CD8-positive, alpha-beta T cell (primary cell): ENCODE measurements at regions of chr2 and their contacts with region 1.

Region 1: GRCh38 chr2:239257511-239257937 is 143.3 kb downstream of the HDAC4 start:
- DNase-seq: peak in 2 of 9 experiments; percentile 28 to 47
- ATAC-seq: peak; percentile 60
- H3K4me3 ChIP-seq: no peak overlapping the region
- H3K4me3 Mint-ChIP-seq: no peak overlapping the region
- H3K27ac ChIP-seq: no peak overlapping the region
- H3K27ac Mint-ChIP-seq: peak overlapping the region; percentile 53
- H3K4me1 ChIP-seq: peaks cover 78% of the 10 kb centered on the region
- H3K4me1 Mint-ChIP-seq: peaks cover 88% of the 10 kb centered on the region
- H3K27me3 ChIP-seq: no peaks in the 10 kb centered on the region
- H3K27me3 Mint-ChIP-seq: no peaks in the 10 kb centered on the region
- CTCF ChIP-seq: no peak

Region 2: DNA sequence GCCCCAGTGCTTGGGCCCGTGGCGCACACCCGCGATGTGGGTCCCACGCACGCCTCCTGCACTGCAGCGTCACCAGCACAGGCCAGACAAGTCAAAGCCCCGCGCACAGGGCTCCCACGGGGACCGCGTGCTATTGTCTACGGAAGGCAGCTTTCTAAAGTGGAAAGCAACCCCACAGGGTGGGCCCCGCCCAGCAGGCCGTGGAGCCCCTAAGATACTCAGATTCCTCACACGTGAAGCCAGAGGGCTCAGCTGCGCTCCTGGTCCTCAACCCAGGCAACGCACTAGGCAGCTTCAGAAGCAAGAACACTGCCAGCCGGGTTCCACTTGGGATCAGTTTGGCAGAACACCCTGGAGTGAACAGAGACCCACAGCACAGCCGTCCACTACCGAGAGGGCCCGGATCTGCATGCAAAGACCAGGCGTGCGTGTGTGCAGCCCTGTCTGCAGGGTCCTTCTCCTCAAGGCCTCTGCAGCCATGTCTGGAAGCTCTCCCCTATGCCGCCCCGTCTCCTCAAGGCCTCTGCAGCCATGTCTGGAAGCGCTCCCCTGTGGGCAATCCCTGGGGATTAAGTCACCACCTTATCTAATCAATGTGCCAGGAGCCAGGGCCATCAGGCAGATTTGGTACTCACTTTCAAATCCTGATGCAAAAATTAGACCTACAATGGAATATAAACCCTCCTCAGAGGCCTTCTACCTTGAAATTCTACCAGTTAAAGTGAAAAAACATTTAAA is 88.0 kb before region 1 on chr2:
- CTCF ChIA-PET with region 1: no interaction called
- POLR2A ChIA-PET with region 1: no interaction called
- intact Hi-C with region 1: no loop called
- DNase-seq: no peak
- ATAC-seq: no peak
- H3K4me3 ChIP-seq: no peak overlapping the region
- H3K4me3 Mint-ChIP-seq: no peak overlapping the region
- H3K27ac ChIP-seq: no peak overlapping the region
- H3K27ac Mint-ChIP-seq: no peak overlapping the region
- H3K4me1 ChIP-seq: peaks cover 7% of the 10 kb centered on the region
- H3K4me1 Mint-ChIP-seq: peaks cover 9% of the 10 kb centered on the region
- H3K27me3 ChIP-seq: no peaks in the 10 kb centered on the region
- H3K27me3 Mint-ChIP-seq: no peaks in the 10 kb centered on the region
- CTCF ChIP-seq: no peak

Region 3: DNA sequence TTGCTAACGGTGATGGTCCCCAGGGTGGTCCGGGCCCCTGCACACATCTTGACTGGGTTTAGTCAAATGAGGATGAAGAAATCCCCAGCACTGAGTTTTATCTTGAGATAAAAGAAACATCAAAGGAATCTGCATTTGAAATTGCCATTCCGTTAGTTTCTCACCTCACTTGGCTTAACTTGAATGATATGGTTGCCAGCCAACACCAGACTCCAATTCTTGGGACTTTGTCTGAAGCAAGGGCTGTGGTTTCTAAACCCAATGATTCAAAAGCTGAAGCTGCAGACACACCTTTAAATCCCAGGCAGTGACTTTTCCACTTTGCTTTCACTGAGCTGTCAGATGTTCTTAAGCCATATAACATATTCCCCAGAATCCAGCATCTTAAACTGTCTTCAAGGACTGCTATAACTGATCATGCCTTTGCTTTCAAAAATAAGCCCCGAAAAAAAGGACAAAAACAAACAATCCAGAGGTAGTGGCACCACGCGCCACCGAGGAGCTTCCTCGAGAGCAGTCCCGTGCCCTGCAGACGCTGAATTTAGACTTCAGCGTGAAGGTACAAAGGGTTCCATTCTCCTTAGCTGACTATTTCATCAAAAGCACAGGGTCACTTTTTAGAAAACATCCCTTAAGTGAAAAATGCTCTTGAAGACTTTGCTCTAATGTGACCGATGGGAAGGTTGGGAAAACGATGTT is 46.0 kb before region 1 on chr2:
- CTCF ChIA-PET with region 1: no interaction called
- POLR2A ChIA-PET with region 1: interaction called, 3 read pairs
- intact Hi-C with region 1: loop called in 1 of 2 experiments (anchors 5 kb)
- DNase-seq: peak in 1 of 9 experiments; percentile 33
- ATAC-seq: no peak
- H3K4me3 ChIP-seq: no peak overlapping the region
- H3K4me3 Mint-ChIP-seq: no peak overlapping the region
- H3K27ac ChIP-seq: no peak overlapping the region
- H3K27ac Mint-ChIP-seq: no peak overlapping the region
- H3K4me1 ChIP-seq: peaks cover 24% of the 10 kb centered on the region
- H3K4me1 Mint-ChIP-seq: peaks cover 52% of the 10 kb centered on the region
- H3K27me3 ChIP-seq: no peaks in the 10 kb centered on the region
- H3K27me3 Mint-ChIP-seq: no peaks in the 10 kb centered on the region
- CTCF ChIP-seq: no peak

Region 4: DNA sequence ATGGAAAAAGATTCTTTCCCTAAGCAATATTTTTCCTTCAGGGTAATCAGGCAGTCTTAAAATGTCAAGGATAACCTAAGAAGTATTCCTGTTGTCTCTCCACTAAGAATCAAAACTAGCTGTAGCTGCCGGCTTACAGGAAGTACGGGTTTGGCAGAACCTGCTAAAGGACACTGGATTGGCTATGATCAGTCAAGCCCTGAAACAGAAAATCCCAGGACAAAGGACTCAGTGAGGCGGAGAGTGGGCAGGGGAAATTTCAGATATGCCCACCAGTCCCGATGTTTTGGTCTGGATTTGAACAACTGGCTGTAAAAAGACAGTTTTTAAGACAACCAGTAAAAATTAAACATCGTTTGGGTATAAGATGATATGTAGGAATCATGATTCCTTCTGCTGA is 12.4 kb before region 1 on chr2:
- CTCF ChIA-PET with region 1: no interaction called
- POLR2A ChIA-PET with region 1: no interaction called
- intact Hi-C with region 1: no loop called
- DNase-seq: no peak
- ATAC-seq: no peak
- H3K4me3 ChIP-seq: no peak overlapping the region
- H3K4me3 Mint-ChIP-seq: no peak overlapping the region
- H3K27ac ChIP-seq: no peak overlapping the region
- H3K27ac Mint-ChIP-seq: no peak overlapping the region
- H3K4me1 ChIP-seq: peaks cover 6% of the 10 kb centered on the region
- H3K4me1 Mint-ChIP-seq: peaks cover 51% of the 10 kb centered on the region
- H3K27me3 ChIP-seq: no peaks in the 10 kb centered on the region
- H3K27me3 Mint-ChIP-seq: no peaks in the 10 kb centered on the region
- CTCF ChIP-seq: no peak